HEK293 (cell line): ENCODE measurements at regions of chr1 and their contacts with region 1.

Region 1: DNA sequence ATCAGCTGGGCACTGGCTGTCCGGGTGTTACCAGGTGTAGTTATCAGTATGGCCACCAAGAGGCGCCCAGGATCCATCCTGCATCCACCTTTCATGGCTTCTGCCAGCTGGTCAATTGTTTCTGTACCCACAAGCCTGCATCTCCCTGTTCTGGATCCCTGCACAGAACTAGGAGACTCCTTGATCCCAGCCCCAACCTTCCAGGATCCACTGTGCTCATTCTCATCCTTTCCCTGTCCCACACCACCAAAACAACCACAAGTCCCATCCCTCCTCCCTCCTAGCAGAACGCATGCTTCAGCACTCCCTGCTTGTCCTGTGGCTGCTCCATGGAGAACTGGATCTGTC is 27.2 kb upstream of the FOXE3 start:
- H3K4me3 ChIP-seq: no peak overlapping the region
- H3K27ac ChIP-seq: no peak overlapping the region
- H3K4me1 ChIP-seq: no peaks in the 10 kb centered on the region
- CTCF ChIP-seq: peak; percentile 79

Region 2: GRCh38 chr1:47179017-47179987 is 209.6 kb before region 1 on chr1:
- CTCF ChIA-PET with region 1: interaction called, 13 read pairs
- POLR2A ChIA-PET with region 1: no interaction called
- H3K4me3 ChIP-seq: peak overlapping the region; percentile 38
- H3K27ac ChIP-seq: no peak overlapping the region
- H3K4me1 ChIP-seq: no peaks in the 10 kb centered on the region
- CTCF ChIP-seq: peak; percentile 91

Region 3: GRCh38 chr1:47399138-47399845 is 10.4 kb after region 1 on chr1:
- CTCF ChIA-PET with region 1: interaction called, 32 read pairs
- POLR2A ChIA-PET with region 1: interaction called, 3 read pairs
- H3K4me3 ChIP-seq: no peak overlapping the region
- H3K27ac ChIP-seq: no peak overlapping the region
- H3K4me1 ChIP-seq: no peaks in the 10 kb centered on the region
- CTCF ChIP-seq: no peak

Region 4: GRCh38 chr1:47424336-47424982 is 35.6 kb after region 1 on chr1:
- CTCF ChIA-PET with region 1: interaction called, 151 read pairs
- POLR2A ChIA-PET with region 1: no interaction called
- H3K4me3 ChIP-seq: no peak overlapping the region
- H3K27ac ChIP-seq: no peak overlapping the region
- H3K4me1 ChIP-seq: no peaks in the 10 kb centered on the region
- CTCF ChIP-seq: peak; percentile 95

Region 5: GRCh38 chr1:47437447-47438164 is 48.7 kb after region 1 on chr1 and contains the start of gene FOXD2:
- CTCF ChIA-PET with region 1: interaction called, 53 read pairs
- POLR2A ChIA-PET with region 1: interaction called, 7 read pairs
- H3K4me3 ChIP-seq: peak within 1 kb of the TSS; percentile 80
- H3K27ac ChIP-seq: peak within 1 kb of the TSS; percentile 98
- H3K4me1 ChIP-seq: no peaks in the 10 kb centered on the region
- CTCF ChIP-seq: peak; percentile 98